Panc1 (cell line): ENCODE measurements at regions of chr17 and their contacts with region 1.

Region 1: DNA sequence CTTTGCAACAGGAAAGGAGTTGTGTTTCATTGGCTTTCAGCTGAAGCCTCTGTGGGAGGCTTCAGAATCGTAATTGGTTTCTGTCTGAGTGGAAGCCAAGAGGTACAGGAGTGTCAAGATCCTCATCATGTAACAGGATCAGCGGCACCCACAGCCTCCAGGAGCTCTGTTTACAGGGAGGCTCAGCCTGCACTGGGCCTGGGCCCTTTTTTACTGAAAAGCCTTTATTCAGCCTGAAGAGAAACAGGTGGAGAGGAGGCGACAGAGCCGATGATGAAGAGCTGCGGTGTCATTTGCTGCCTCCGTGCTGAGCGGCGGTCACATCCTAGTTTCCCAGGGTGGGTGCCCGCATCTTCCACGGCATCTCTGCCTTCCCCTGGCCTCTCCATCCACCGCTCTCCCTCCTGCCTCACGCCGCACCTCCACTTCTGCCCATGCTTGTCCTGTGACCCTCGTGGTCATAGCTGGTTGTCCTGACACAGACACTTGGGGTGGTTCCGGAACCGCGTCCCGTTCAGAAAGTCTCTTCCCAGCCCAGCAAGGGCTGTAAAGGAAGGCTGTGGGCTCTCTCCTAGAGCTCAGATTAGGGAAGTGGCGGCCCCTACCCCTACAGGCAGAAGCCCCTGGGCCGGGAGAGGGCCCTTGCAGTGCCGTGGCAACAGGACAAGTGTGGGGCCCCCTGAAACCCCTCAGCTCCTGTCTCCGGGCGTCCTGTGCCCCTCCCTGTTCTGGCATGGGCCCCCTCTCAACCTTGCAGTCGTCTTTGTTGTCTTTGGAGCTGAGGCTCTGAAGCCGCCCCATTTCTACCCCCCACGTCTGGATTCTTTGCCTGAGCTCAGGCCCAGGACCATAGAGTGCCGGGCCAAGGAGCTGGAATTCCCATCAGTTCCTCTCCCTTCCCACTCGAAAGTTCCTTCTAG is 53.9 kb upstream of the CHMP6 start:
- DNase-seq: no peak
- ATAC-seq: no peak; the same call in 1 of the 2 replicates
- H3K4me3 ChIP-seq: no peak overlapping the region
- H3K27ac ChIP-seq: no peak overlapping the region
- H3K4me1 ChIP-seq: no peaks in the 10 kb centered on the region
- H3K27me3 ChIP-seq: no peaks in the 10 kb centered on the region
- CTCF ChIP-seq: no peak

Region 2: GRCh38 chr17:80959330-80960036 is 21.8 kb after region 1 on chr17:
- CTCF ChIA-PET with region 1: interaction called, 16 read pairs
- POLR2A ChIA-PET with region 1: no interaction called
- in situ Hi-C with region 1: no loop called
- intact Hi-C with region 1: no loop called
- DNase-seq: no peak
- ATAC-seq: peak; percentile 46
- H3K4me3 ChIP-seq: no peak overlapping the region
- H3K27ac ChIP-seq: no peak overlapping the region
- H3K4me1 ChIP-seq: no peaks in the 10 kb centered on the region
- H3K27me3 ChIP-seq: no peaks in the 10 kb centered on the region
- CTCF ChIP-seq: no peak

Region 3: GRCh38 chr17:81165246-81166032 is 227.7 kb after region 1 on chr17 and contains the start of gene PVALEF:
- CTCF ChIA-PET with region 1: no interaction called
- POLR2A ChIA-PET with region 1: no interaction called
- in situ Hi-C with region 1: no loop called
- intact Hi-C with region 1: no loop called
- DNase-seq: no peak
- ATAC-seq: peak; percentile 61
- H3K4me3 ChIP-seq: peak within 1 kb of the TSS; percentile 35 to 51
- H3K27ac ChIP-seq: peak within 1 kb of the TSS; percentile 45
- H3K4me1 ChIP-seq: peaks cover 16% of the 10 kb centered on the region
- H3K27me3 ChIP-seq: no peaks in the 10 kb centered on the region
- CTCF ChIP-seq: no peak
- total RNA-seq, gene PVALEF: not detected